HAP-1 (cell line): ENCODE measurements at regions of chr3 and their contacts with region 1.

Region 1: DNA sequence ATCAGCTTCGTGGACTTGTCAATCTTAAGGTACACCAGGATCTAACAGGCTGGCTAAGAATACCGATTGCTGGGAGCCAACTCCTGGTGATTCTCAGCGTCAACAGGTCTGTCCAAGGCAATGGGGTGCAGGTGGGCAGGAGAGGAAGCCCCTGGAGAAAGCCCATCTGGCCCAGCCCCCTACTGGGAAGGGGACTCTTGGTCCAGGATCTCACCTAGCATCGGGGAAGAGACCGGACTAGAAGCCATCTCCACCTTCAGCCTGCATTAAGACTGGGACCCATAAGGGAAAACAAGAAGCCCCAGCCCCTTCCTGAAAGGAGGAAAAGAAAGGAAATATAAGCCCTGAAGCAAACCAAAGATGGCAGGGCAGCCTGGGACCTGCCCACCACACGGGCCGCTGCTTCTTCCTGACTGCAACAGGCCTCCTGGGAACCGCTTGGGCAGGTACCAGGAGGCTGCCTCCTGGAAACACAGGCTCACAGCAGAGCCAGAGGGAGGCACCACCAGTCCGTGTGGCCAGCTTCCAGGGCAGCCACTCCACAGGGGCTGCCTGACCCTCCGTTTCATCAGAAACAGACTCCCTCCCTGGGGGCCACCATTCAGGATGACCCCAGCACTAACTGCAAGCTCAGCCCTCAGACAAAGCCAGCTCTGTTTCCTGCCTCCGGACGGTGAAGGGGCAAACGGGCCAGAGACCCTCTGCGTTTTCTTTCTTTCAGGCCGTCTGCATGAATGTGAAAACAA is 100.2 kb downstream of the LRIG1 start:
- DNase-seq: no peak
- H3K4me3 ChIP-seq: no peak overlapping the region
- H3K4me1 ChIP-seq: no peaks in the 10 kb centered on the region
- H3K27me3 ChIP-seq: no peaks in the 10 kb centered on the region

Region 2: GRCh38 chr3:65597226-65597951 is 803.2 kb before region 1 on chr3:
- in situ Hi-C with region 1: no loop called
- DNase-seq: peak; percentile 72 to 86
- H3K4me3 ChIP-seq: peak overlapping the region; percentile 18
- H3K4me1 ChIP-seq: peaks cover 45% of the 10 kb centered on the region
- H3K27me3 ChIP-seq: no peaks in the 10 kb centered on the region

Region 3: GRCh38 chr3:66816090-66816761 is 415.6 kb after region 1 on chr3:
- in situ Hi-C with region 1: loop called (anchors 5 kb)
- DNase-seq: peak; percentile 28 to 77
- H3K4me3 ChIP-seq: no peak overlapping the region
- H3K4me1 ChIP-seq: peaks cover 34% of the 10 kb centered on the region
- H3K27me3 ChIP-seq: no peaks in the 10 kb centered on the region